Heart left ventricle (tissue), 16 donors: ENCODE measurements at regions of chr6 and their contacts with region 1.

Region 1: DNA sequence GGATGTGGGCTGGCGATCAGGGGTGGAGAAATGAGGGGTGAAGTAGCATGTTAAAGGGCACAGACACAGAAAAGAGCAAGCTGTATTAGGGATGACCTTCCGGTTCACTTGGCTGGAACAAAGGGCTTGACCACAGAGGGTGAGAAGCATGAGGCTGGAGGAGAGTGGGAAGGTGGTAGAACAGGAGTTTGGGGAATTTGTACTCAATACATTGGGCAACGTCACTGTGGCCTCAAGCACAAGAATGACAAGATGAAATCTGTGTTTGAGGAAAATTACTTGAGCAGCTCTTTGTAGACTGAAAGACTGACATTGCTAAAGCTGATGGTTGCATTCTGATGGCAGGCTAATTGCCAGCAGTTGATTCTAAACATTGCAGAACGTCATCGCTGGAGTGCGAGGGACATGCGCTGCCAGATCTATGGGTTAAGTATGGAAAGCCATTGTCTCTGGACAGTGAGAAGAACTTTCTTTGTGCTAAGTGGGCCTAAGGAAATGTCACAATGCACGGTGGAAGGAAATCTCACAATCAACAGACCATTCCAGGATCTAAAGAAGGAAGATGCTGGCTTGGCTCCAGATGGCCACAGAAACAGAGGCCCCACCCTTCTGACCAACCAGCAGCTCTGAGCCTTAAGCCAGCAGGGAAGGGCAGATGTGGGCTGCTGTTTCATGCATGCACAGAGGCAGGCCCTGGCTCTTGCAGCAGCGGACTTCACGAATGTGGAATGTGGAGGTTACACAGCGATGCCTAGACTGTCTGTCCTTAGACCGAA is 156.1 kb downstream of the SOBP start:
- DNase-seq: peak; percentile 68 to 80 (median 72)
- ATAC-seq: peak in 3 of 4 donors; percentile 67 to 72 (median 67)
- H3K4me3 ChIP-seq: no peak overlapping the region
- H3K27ac ChIP-seq: peak overlapping the region in 7 of 12 donors; percentile 30 to 63 (median 37)
- H3K4me1 ChIP-seq: peaks cover 3 to 51% (median 33%) of the 10 kb centered on the region in 12 donors
- H3K27me3 ChIP-seq: no peaks in the 10 kb centered on the region
- CTCF ChIP-seq: no peak
- POLR2A ChIP-seq: no peak

Region 2: GRCh38 chr6:107607116-107607515 is 38.9 kb before region 1 on chr6:
- intact Hi-C with region 1: loop called in 1 of 10 experiments (anchors 5 kb)
- DNase-seq: peak in 4 of 5 donors; percentile 46 to 75 (median 68)
- ATAC-seq: peak; percentile 52 to 77 (median 62)
- H3K4me3 ChIP-seq: no peak overlapping the region
- H3K27ac ChIP-seq: peak overlapping the region in 5 of 12 donors; percentile 6 to 41 (median 29)
- H3K4me1 ChIP-seq: peaks cover 5 to 68% (median 41%) of the 10 kb centered on the region in 12 donors
- H3K27me3 ChIP-seq: no peaks in the 10 kb centered on the region
- CTCF ChIP-seq: peak in 2 of 12 donors; percentile 41 to 43
- POLR2A ChIP-seq: no peak

Region 3: DNA sequence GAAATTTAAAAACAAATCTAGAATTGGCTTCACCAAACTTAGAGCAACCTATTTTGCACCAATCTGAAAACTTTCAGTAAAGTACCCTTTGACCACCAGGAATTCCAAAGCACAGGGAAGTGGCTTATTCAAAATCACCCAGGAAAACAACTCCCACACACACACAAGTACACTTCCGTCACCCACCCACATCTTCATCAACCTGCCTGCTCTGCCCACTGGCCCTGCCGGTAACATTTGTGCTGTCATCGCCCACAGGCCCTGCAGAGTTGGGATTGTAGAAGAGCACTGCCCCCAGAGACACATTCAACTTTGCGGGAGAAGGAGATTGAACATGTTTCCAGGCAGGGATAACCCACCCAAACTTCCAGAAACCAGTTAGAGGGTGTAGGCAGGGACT is 197.4 kb after region 1 on chr6:
- intact Hi-C with region 1: no loop called
- DNase-seq: no peak
- ATAC-seq: no peak
- H3K4me3 ChIP-seq: no peak overlapping the region
- H3K27ac ChIP-seq: no peak overlapping the region
- H3K4me1 ChIP-seq: peaks cover 0 to 8% (median 5%) of the 10 kb centered on the region in 12 donors
- H3K27me3 ChIP-seq: peaks cover 0 to 16% (median 6%) of the 10 kb centered on the region in 9 donors
- CTCF ChIP-seq: no peak
- POLR2A ChIP-seq: no peak